Activated T-helper 2 cell treated with anti-CD3 and anti-CD28 coated beads, Interferon-gamma antibody, Interleukin-2, Interleukin-4, amounts not matched to agents 10 μg/mL and 5 μg/mL and 100 μg/mL, durations not matched to agents 14 hours and 24 hours and 36 hours (primary cell): ENCODE measurements at regions of chr6 and their contacts with region 1.

Region 1: DNA sequence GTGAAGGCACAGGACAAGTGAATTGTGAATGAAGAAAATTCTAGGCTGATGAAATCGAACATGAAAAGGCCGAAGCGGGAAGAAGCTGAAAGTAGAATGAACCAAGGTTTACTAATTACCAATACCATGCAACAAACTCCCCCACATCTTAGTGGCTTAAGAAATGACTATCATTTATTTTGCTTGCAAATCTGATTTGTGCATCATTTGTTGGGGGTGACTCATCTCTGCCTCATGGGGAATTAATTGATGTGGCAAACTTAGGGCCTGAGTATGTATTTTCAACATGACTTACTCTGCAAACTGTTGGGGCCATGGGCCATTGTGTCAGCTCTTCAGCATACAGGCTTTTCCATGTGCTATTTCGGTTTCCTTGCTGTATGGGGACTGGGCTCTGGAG is 26.8 kb downstream of the PPP1R14C start:
- DNase-seq: no peak
- H3K4me3 Mint-ChIP-seq: no peak overlapping the region
- H3K27ac Mint-ChIP-seq: peak overlapping the region; percentile 48
- H3K4me1 Mint-ChIP-seq: peaks cover 16% of the 10 kb centered on the region
- H3K27me3 Mint-ChIP-seq: peaks cover 15% of the 10 kb centered on the region

Region 2: GRCh38 chr6:150119173-150119572 is 50.4 kb before region 1 on chr6:
- intact Hi-C with region 1: no loop called
- DNase-seq: no peak
- H3K4me3 Mint-ChIP-seq: no peak overlapping the region
- H3K27ac Mint-ChIP-seq: no peak overlapping the region
- H3K4me1 Mint-ChIP-seq: peaks cover 4% of the 10 kb centered on the region
- H3K27me3 Mint-ChIP-seq: peaks cover 16% of the 10 kb centered on the region

Region 3: GRCh38 chr6:150142670-150143515 is 26.7 kb before region 1 on chr6 and contains the start of gene PPP1R14C:
- intact Hi-C with region 1: no loop called
- DNase-seq: no peak
- H3K4me3 Mint-ChIP-seq: peak within 1 kb of the TSS; percentile 62
- H3K27ac Mint-ChIP-seq: no peak within 1 kb of the TSS
- H3K4me1 Mint-ChIP-seq: peaks cover 11% of the 10 kb centered on the region
- H3K27me3 Mint-ChIP-seq: peaks cover 72% of the 10 kb centered on the region
- total RNA-seq, gene PPP1R14C: 0.11 and 0.23 TPM in 2 replicates

Region 4: GRCh38 chr6:150153542-150153876 is 16.1 kb before region 1 on chr6:
- intact Hi-C with region 1: loop called (anchors 1 kb)
- DNase-seq: no peak
- H3K4me3 Mint-ChIP-seq: no peak overlapping the region
- H3K27ac Mint-ChIP-seq: no peak overlapping the region
- H3K4me1 Mint-ChIP-seq: peaks cover 27% of the 10 kb centered on the region
- H3K27me3 Mint-ChIP-seq: peaks cover 59% of the 10 kb centered on the region

Region 5: GRCh38 chr6:150238336-150238741 is 68.7 kb after region 1 on chr6:
- intact Hi-C with region 1: loop called (anchors 1 kb)
- DNase-seq: no peak
- H3K4me3 Mint-ChIP-seq: no peak overlapping the region
- H3K27ac Mint-ChIP-seq: peak overlapping the region; percentile 3
- H3K4me1 Mint-ChIP-seq: peaks cover 47% of the 10 kb centered on the region
- H3K27me3 Mint-ChIP-seq: peaks cover 6% of the 10 kb centered on the region

Region 6: GRCh38 chr6:150256618-150257272 is 87.1 kb after region 1 on chr6:
- intact Hi-C with region 1: loop called (anchors 2 kb)
- DNase-seq: no peak
- H3K4me3 Mint-ChIP-seq: no peak overlapping the region
- H3K27ac Mint-ChIP-seq: no peak overlapping the region
- H3K4me1 Mint-ChIP-seq: peaks cover 48% of the 10 kb centered on the region
- H3K27me3 Mint-ChIP-seq: peaks cover 2% of the 10 kb centered on the region

Region 7: DNA sequence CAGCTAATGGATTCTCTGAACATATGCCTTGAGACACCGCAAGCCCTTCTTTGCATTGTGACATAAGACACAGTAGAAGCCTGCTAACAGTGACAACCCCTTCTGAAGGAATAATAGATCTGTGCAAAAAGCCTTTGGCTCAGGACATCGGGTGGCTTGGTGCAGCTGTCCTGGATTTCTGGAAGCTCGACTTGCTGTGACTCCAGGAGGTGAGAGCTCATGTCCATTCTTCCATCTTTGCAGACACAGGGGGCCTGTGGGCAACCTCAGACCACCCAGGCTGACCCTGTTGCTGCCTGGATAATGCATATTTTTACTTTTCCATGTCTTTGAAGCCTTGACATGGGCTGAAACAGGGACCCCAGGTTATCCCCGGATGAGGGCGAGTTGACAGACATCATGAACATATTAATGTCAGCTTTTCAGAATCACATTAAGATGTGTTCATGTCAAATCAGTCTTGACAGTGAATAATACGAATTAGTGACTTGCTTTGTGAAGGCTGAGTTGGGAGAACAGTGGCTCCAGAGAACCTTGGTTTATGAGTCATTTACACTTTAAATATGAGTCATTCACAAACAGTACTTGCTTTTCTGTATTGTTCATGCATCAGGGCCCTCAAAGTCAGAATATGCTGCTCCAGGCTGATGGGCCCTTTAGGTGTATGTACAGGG is 132.4 kb after region 1 on chr6:
- intact Hi-C with region 1: loop called (anchors 5 kb)
- DNase-seq: no peak
- H3K4me3 Mint-ChIP-seq: no peak overlapping the region
- H3K27ac Mint-ChIP-seq: no peak overlapping the region
- H3K4me1 Mint-ChIP-seq: peaks cover 10% of the 10 kb centered on the region
- H3K27me3 Mint-ChIP-seq: peaks cover 5% of the 10 kb centered on the region